Ovary (tissue), 10 donors: ENCODE measurements at regions of chr1 and their contacts with region 1.

Region 1: GRCh38 chr1:211192227-211192626 is 58.3 kb upstream of the KCNH1 start:
- DNase-seq: no peak
- H3K4me3 ChIP-seq: no peak overlapping the region
- H3K27ac ChIP-seq: no peak overlapping the region
- H3K4me1 ChIP-seq: no peaks in the 10 kb centered on the region
- H3K27me3 ChIP-seq: no peaks in the 10 kb centered on the region
- CTCF ChIP-seq: no peak
- EP300 ChIP-seq: no peak
- POLR2A ChIP-seq: no peak

Region 2: DNA sequence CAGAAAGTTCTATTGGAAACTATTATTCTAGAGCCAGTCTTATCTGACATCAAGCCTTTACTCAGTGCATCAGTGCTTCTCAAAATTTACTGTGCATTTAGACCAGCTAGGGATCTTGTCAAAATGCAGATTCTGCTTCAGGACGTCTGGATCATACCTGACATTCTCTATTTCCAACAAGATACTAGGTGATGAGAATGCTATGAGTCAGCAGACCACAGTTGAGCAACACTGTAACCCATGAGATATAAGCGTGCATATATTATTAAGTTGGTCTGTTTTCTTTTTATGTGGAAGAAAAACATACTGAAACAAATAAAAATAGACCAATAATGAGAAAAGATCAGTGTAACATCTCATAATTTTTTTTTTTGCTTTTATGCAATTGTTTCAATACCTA is 17.9 kb before region 1 on chr1:
- intact Hi-C with region 1: no loop called
- DNase-seq: no peak
- H3K4me3 ChIP-seq: no peak overlapping the region
- H3K27ac ChIP-seq: no peak overlapping the region
- H3K4me1 ChIP-seq: no peaks in the 10 kb centered on the region
- H3K27me3 ChIP-seq: peaks cover 2% of the 10 kb centered on the region
- CTCF ChIP-seq: no peak
- EP300 ChIP-seq: no peak
- POLR2A ChIP-seq: no peak

Region 3: DNA sequence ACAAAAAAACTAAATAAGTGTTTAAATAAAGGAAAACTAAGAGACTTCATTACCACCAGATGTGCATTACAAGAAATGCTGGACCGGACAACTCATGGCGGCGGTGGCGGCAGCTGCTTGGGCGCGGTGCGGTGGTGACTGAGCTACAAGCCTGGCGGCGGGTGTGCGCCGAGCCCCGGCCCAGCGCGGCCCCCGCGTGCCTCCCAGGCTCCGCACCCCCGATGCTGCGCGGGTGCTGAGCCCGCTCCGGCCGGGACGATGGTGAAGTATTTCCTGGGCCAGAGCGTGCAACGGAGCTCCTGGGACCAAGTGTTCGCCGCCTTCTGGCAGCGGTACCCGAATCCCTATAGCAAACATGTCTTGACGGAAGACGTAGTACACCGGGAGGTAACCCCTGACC is 14.8 kb after region 1 on chr1:
- intact Hi-C with region 1: loop called in 1 of 4 experiments (anchors 2 kb)
- DNase-seq: no peak
- H3K4me3 ChIP-seq: no peak overlapping the region
- H3K27ac ChIP-seq: no peak overlapping the region
- H3K4me1 ChIP-seq: no peaks in the 10 kb centered on the region
- H3K27me3 ChIP-seq: no peaks in the 10 kb centered on the region
- CTCF ChIP-seq: no peak
- EP300 ChIP-seq: no peak
- POLR2A ChIP-seq: no peak

Region 4: DNA sequence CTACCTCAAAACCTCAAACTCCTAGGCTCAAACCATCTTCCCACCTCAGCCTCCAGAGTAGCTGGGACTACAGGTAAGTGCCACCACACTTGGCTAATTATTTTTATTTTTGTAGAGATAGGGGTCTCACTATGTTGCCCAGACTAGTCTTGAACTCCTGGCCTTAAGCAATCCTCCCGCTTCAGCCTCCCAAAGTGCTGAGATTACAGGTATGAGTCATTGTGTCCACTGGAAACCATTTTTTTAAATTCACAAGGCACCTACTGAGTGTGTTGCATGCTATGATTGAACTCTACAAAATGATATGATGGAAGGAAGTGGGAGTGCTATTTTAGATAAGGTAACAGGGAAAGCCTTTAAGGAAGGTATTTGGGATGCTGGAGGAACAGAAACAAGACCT is 25.2 kb after region 1 on chr1:
- intact Hi-C with region 1: no loop called
- DNase-seq: no peak
- H3K4me3 ChIP-seq: no peak overlapping the region
- H3K27ac ChIP-seq: no peak overlapping the region
- H3K4me1 ChIP-seq: no peaks in the 10 kb centered on the region
- H3K27me3 ChIP-seq: no peaks in the 10 kb centered on the region
- CTCF ChIP-seq: no peak
- EP300 ChIP-seq: no peak
- POLR2A ChIP-seq: no peak

Region 5: DNA sequence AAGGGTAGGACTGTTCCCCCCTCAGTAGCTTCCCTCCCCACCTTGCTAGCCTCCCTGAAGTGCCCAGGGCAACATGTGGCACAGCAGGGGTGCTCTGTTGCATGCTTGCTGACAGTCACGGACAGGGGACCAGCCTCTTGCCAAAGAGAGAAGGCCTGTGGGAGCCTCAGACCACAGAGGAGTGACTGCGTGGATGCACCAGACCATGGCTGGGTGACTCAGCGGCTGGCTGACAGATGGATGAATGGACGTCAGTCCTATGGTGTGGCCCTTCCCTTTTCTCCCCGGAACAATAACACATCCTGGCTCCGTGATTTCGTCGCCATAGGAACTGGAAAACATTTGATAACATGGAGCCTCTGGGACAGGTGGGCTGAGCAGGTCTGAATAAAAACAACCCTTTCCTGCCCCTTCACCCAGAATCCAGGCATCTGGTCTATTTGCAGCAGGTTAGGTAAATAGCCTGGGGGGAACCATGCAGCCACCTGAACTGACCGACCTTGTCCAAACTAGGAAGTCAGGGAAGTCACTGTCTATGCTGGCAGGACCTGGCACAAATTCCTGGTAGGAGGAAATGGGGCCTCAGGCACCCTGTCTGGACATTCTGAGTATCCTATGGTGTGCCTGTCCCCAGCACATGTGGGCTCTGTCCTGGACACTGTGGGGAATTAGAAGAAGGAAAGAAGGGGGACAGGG is 1293.8 kb after region 1 on chr1:
- intact Hi-C with region 1: no loop called
- DNase-seq: no peak
- H3K4me3 ChIP-seq: no peak overlapping the region
- H3K27ac ChIP-seq: no peak overlapping the region
- H3K4me1 ChIP-seq: peaks cover 1% of the 10 kb centered on the region
- H3K27me3 ChIP-seq: no peaks in the 10 kb centered on the region
- CTCF ChIP-seq: no peak
- EP300 ChIP-seq: no peak
- POLR2A ChIP-seq: no peak